Mammary epithelial cell (primary cell): ENCODE measurements at regions of chr7 and their contacts with region 1.

Region 1: DNA sequence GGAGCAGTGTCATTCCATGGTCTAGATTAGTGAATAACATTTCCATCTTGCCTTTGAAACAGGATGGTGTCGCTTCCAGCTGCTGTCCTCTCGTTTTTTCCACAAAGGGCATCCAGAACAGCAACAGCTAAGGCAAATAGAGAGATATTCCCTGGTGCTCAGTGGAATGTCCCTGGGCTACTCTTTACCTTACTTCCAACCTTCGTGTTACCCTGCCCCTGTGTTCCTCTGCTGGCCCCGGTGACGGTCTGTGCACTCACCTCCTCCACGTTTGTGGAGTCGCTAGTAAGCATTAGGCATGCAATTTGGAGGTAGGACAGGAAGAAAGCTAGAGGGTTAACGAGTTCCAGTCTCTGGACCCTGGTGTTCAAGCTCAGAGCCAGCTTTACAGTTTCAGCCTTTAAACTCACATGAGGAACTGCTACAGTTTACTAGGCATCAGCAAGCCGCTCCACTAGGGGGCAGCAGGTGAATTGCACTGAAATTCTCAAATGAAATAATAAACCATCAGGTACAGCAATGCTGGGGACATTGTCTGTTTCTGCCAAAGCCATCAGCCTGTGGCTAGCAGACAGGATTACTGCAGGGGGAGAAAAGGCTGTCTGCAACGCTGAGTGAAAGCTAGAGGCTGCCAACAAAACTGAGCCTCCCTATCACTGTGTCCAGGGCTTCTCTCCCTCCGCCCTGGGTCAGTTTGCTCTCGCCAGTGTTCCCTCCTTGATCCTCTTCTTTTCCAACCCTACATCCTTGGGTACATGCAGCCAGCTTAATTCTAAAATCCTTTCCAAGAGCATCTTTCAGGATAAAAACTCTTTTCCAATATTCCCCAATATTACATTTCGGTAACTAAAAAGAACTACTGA is 9.0 kb downstream of the MRPL32 start:
- DNase-seq: peak; percentile 43
- H3K4me3 ChIP-seq: no peak overlapping the region
- H3K27ac ChIP-seq: no peak overlapping the region
- H3K4me1 ChIP-seq: no peaks in the 10 kb centered on the region
- H3K27me3 ChIP-seq: no peaks in the 10 kb centered on the region
- CTCF ChIP-seq: peak; percentile 94

Region 2: DNA sequence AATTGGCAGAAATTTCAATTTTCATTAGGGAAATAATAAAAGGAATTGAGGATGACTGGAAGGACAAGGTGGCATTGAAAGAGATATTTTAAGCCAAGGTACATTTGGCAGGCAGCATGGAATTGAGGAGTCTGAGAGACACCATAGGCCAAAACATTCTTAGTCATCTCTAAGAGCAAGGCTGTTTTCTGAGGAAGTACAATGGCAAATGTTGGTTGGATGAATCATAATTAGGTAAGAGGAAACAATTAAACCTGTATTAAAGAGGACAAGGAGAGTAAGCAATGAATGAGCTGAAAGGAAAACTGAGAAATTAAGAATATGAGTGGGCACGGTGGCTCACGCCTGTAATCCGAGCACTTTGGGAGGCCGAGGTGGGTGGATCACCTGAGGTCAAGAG is 77.2 kb after region 1 on chr7:
- CTCF ChIA-PET with region 1: no interaction called
- dilution Hi-C with region 1: no loop called
- in situ Hi-C with region 1: no loop called
- intact Hi-C with region 1: no loop called
- DNase-seq: peak; percentile 90
- H3K4me3 ChIP-seq: no peak overlapping the region
- H3K27ac ChIP-seq: no peak overlapping the region
- H3K4me1 ChIP-seq: no peaks in the 10 kb centered on the region
- H3K27me3 ChIP-seq: no peaks in the 10 kb centered on the region
- CTCF ChIP-seq: no peak

Region 3: DNA sequence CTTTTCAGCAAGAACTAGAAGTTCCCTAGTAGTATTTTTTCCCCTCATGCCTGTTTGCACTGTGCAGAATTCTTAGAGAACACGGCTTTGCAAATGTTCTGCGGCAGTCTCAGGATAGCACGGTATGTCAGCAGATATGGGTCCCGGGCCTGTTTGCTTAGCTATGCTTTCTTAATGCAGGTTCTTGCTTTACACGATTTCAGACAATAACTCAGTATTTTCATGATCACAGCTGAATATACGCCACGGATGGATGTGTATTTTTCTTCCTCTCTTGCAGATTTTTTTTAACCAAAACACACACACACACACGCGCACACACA is 308.6 kb after region 1 on chr7:
- CTCF ChIA-PET with region 1: no interaction called
- dilution Hi-C with region 1: no loop called
- in situ Hi-C with region 1: loop called in 1 of 2 experiments (anchors 10 kb)
- intact Hi-C with region 1: no loop called
- DNase-seq: no peak
- H3K4me3 ChIP-seq: no peak overlapping the region
- H3K27ac ChIP-seq: no peak overlapping the region
- H3K4me1 ChIP-seq: no peaks in the 10 kb centered on the region
- H3K27me3 ChIP-seq: no peaks in the 10 kb centered on the region
- CTCF ChIP-seq: no peak

Region 4: GRCh38 chr7:43353902-43354301 is 412.7 kb after region 1 on chr7:
- CTCF ChIA-PET with region 1: no interaction called
- dilution Hi-C with region 1: no loop called
- in situ Hi-C with region 1: no loop called
- intact Hi-C with region 1: loop called (anchors 2 kb)
- DNase-seq: no peak
- H3K4me3 ChIP-seq: no peak overlapping the region
- H3K27ac ChIP-seq: no peak overlapping the region
- H3K4me1 ChIP-seq: no peaks in the 10 kb centered on the region
- H3K27me3 ChIP-seq: no peaks in the 10 kb centered on the region
- CTCF ChIP-seq: no peak

Region 5: GRCh38 chr7:43454936-43455518 is 513.8 kb after region 1 on chr7:
- CTCF ChIA-PET with region 1: interaction called, 4 read pairs
- dilution Hi-C with region 1: no loop called
- in situ Hi-C with region 1: loop called (anchors 10 to 25 kb)
- intact Hi-C with region 1: loop called (anchors 1 kb)
- DNase-seq: peak; percentile 66
- H3K4me3 ChIP-seq: no peak overlapping the region
- H3K27ac ChIP-seq: no peak overlapping the region
- H3K4me1 ChIP-seq: peaks cover 5% of the 10 kb centered on the region
- H3K27me3 ChIP-seq: no peaks in the 10 kb centered on the region
- CTCF ChIP-seq: peak; percentile 27 to 51

Region 6: GRCh38 chr7:43582503-43583423 is 641.5 kb after region 1 on chr7 and contains the start of gene STK17A:
- CTCF ChIA-PET with region 1: no interaction called
- dilution Hi-C with region 1: no loop called
- in situ Hi-C with region 1: no loop called
- intact Hi-C with region 1: loop called (anchors 2 kb)
- DNase-seq: peak; percentile 90
- H3K4me3 ChIP-seq: peak within 1 kb of the TSS; percentile 82 to 98 (median 96)
- H3K27ac ChIP-seq: peak within 1 kb of the TSS; percentile 98
- H3K4me1 ChIP-seq: peaks cover 13% of the 10 kb centered on the region
- H3K27me3 ChIP-seq: no peaks in the 10 kb centered on the region
- CTCF ChIP-seq: peak; percentile 92 to 99
- total RNA-seq, gene STK17A: 109 to 140 TPM

Region 7: DNA sequence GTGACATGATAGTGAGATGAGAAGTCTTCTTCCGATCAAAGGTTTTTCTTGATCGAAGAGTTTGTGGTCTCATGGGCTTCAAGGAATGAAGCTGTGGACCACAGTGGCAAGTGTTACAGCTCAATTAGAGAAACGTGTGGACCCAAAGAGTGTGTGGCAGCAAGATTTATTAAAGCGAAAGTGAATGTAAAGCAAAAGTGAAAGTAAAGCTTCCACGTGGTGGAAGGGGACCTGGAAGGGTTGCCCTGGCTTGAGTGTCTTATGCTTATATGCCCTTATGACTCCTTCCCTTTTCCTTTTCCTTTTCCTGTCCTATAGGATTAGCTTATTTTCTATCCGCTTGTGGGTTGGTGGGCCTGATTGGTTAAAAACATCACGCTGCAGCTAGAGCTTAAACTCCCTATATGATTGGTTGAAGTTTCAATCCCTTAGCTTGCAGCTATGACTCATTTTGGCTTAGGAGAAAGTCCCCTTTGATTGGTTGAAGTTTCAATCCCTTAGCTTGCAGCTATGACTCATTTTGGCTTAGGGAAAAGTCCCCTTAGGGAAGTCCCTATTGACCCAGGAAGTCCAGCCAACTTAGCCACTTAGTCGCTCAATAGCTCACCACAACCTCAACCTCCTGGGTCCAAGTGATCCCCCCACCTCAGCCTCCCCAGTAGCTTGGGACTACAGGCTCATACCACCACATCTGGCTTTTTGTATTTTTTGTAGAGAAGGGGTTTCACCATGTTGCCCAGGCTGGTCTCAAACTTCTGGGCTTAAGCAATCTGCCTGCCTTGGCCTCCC is 893.4 kb after region 1 on chr7:
- CTCF ChIA-PET with region 1: no interaction called
- dilution Hi-C with region 1: no loop called
- in situ Hi-C with region 1: no loop called
- intact Hi-C with region 1: loop called (anchors 2 kb)
- DNase-seq: peak; percentile 66
- H3K4me3 ChIP-seq: no peak overlapping the region
- H3K27ac ChIP-seq: no peak overlapping the region
- H3K4me1 ChIP-seq: peaks cover 3% of the 10 kb centered on the region
- H3K27me3 ChIP-seq: no peaks in the 10 kb centered on the region
- CTCF ChIP-seq: no peak